Activated CD4-positive, alpha-beta T cell treated with anti-CD3 and anti-CD28 coated beads for 36 hours (primary cell): ENCODE measurements at regions of chr1 and their contacts with region 1.

Region 1: GRCh38 chr1:117644696-117645311 is 39.0 kb downstream of the TENT5C start:
- DNase-seq: no peak
- ATAC-seq: no peak
- H3K4me3 Mint-ChIP-seq: no peak overlapping the region
- H3K27ac Mint-ChIP-seq: no peak overlapping the region
- H3K4me1 Mint-ChIP-seq: peaks cover 10% of the 10 kb centered on the region
- H3K27me3 Mint-ChIP-seq: peaks cover 30% of the 10 kb centered on the region

Region 2: DNA sequence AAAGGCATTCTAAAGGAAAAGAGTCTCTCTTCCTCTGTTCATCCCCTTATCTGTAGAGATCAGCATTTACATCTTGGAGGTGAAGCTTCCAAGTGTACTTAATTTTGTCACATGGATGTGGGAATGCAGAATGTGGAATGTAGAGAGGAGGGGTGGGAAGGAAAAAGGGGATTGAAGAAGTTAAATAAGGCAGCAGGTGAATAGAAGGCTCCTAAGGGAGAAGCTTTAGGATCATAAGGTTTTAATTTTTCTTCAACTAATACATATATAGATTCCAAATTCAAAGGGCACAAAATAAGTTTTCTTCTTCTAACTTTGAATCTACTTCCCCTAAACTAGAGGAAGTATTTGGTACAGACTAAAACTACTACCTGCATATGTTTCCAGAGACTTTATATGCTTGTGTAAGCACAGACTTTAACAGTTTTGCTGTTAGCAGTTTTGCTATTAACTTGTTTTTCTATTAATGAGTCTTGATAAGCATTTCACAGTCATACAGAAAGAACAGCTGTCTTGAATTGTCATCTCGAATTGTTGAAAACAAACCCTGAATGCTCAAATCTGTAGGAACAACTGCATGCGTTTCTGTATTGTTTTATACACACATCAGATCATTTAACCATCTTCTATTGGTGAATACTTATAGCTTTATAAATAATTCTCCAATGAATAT is 26.2 kb before region 1 on chr1:
- CTCF ChIA-PET with region 1: interaction called, 3 read pairs
- POLR2A ChIA-PET with region 1: interaction called, 4 read pairs
- intact Hi-C with region 1: loop called in 1 of 2 experiments (anchors 2 kb)
- DNase-seq: no peak
- ATAC-seq: peak; percentile 65
- H3K4me3 Mint-ChIP-seq: no peak overlapping the region
- H3K27ac Mint-ChIP-seq: peak overlapping the region; percentile 10
- H3K4me1 Mint-ChIP-seq: peaks cover 60% of the 10 kb centered on the region
- H3K27me3 Mint-ChIP-seq: peaks cover 3% of the 10 kb centered on the region

Region 3: DNA sequence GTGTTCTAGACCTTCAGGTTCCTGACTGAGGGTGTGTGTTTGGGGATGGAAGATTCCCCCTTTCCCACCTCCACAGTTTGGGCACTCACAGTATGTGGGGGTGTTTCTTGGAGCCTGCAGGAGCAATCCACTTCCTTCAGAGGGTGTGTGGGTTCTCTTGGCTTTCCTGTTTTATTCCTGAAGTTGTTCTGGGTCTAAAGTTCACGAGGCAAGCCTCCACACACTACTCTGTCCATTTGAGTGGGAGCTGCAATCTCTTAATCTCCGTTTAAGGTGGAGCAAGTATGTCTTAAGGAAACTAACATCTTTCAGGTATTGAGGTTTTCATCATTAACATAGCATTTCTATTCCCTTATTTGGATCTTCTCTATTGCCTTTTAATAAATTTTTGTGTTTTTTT is 102.8 kb after region 1 on chr1:
- CTCF ChIA-PET with region 1: no interaction called
- POLR2A ChIA-PET with region 1: no interaction called
- intact Hi-C with region 1: no loop called
- DNase-seq: no peak
- ATAC-seq: no peak
- H3K4me3 Mint-ChIP-seq: no peak overlapping the region
- H3K27ac Mint-ChIP-seq: no peak overlapping the region
- H3K4me1 Mint-ChIP-seq: no peaks in the 10 kb centered on the region
- H3K27me3 Mint-ChIP-seq: peaks cover 15% of the 10 kb centered on the region